ENCODE measurements at regions of chr13 and their contacts with region 1.

Region 1: DNA sequence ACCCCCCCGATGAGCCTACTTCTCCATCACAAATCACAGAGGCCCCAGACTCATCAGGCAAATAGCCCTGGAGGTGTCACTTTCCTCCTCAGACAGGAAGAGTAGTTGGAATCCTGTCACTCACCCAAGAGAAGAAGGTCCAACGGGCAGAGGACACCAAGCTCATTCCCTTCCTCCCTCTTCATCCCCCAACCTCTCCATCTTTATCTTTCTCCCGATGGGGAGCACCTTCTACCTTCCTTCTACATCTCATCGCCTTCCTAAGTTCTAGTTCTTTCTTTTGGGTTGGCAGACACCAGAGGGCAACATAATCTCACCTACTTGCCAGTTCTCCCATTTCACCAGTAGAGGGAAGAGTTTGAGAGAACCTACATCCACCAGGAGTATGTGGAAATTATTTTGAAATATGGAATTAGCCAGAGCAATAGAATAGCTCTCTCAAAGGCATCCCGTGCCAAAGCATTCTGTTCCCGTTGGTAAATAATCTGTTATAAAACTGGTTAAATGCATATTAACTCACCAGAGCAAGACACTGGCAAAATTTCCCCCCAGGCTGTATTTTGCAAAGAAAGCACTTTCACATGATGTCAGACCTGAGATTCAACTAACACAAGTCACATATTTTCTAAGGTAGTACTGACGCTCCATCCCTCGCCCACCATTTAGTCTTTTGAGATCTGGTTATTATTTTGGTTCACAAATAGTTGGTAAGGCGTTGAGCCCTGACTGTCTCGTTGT is 55.0 kb downstream of the ZIC5 start:
- DNase-seq: peak; percentile 66
- H3K4me3 ChIP-seq: no peak overlapping the region
- H3K27ac ChIP-seq: no peak overlapping the region
- H3K4me1 ChIP-seq: no peaks in the 10 kb centered on the region
- H3K27me3 ChIP-seq: no peaks in the 10 kb centered on the region
- CTCF ChIP-seq: peak; percentile 98 to 99

Region 2: GRCh38 chr13:99442273-99442895 is 474.2 kb before region 1 on chr13:
- CTCF ChIA-PET with region 1: no interaction called
- dilution Hi-C with region 1: no loop called
- in situ Hi-C with region 1: no loop called
- intact Hi-C with region 1: loop called (anchors 5 kb)
- DNase-seq: peak; percentile 16
- H3K4me3 ChIP-seq: no peak overlapping the region
- H3K27ac ChIP-seq: no peak overlapping the region
- H3K4me1 ChIP-seq: no peaks in the 10 kb centered on the region
- H3K27me3 ChIP-seq: no peaks in the 10 kb centered on the region
- CTCF ChIP-seq: peak; percentile 85 to 98

Region 3: GRCh38 chr13:99617474-99618255 is 298.9 kb before region 1 on chr13:
- CTCF ChIA-PET with region 1: no interaction called
- dilution Hi-C with region 1: no loop called
- in situ Hi-C with region 1: no loop called
- intact Hi-C with region 1: loop called (anchors 1 kb)
- DNase-seq: no peak
- H3K4me3 ChIP-seq: no peak overlapping the region
- H3K27ac ChIP-seq: no peak overlapping the region
- H3K4me1 ChIP-seq: peaks cover 22% of the 10 kb centered on the region
- H3K27me3 ChIP-seq: no peaks in the 10 kb centered on the region
- CTCF ChIP-seq: peak; percentile 73 to 79

Region 4: GRCh38 chr13:99935777-99936176 is 19.2 kb after region 1 on chr13:
- CTCF ChIA-PET with region 1: interaction called, 16 read pairs
- dilution Hi-C with region 1: no loop called
- in situ Hi-C with region 1: no loop called
- intact Hi-C with region 1: no loop called
- DNase-seq: no peak
- H3K4me3 ChIP-seq: no peak overlapping the region
- H3K27ac ChIP-seq: no peak overlapping the region
- H3K4me1 ChIP-seq: no peaks in the 10 kb centered on the region
- H3K27me3 ChIP-seq: peaks cover 2% of the 10 kb centered on the region
- CTCF ChIP-seq: no peak

Region 5: GRCh38 chr13:100514788-100515409 is 598.4 kb after region 1 on chr13:
- CTCF ChIA-PET with region 1: no interaction called
- dilution Hi-C with region 1: loop called (anchors 25 kb)
- in situ Hi-C with region 1: loop called (anchors 10 to 25 kb)
- intact Hi-C with region 1: loop called (anchors 1 kb)
- DNase-seq: peak; percentile 48
- H3K4me3 ChIP-seq: no peak overlapping the region
- H3K27ac ChIP-seq: no peak overlapping the region
- H3K4me1 ChIP-seq: no peaks in the 10 kb centered on the region
- H3K27me3 ChIP-seq: no peaks in the 10 kb centered on the region
- CTCF ChIP-seq: peak; percentile 94 to 97

Region 6: GRCh38 chr13:100532090-100532766 is 615.7 kb after region 1 on chr13:
- CTCF ChIA-PET with region 1: interaction called, 11 read pairs
- dilution Hi-C with region 1: no loop called
- in situ Hi-C with region 1: no loop called
- intact Hi-C with region 1: no loop called
- DNase-seq: no peak
- H3K4me3 ChIP-seq: no peak overlapping the region
- H3K27ac ChIP-seq: no peak overlapping the region
- H3K4me1 ChIP-seq: no peaks in the 10 kb centered on the region
- H3K27me3 ChIP-seq: no peaks in the 10 kb centered on the region
- CTCF ChIP-seq: no peak

Region 7: GRCh38 chr13:100854021-100854420 is 937.5 kb after region 1 on chr13:
- CTCF ChIA-PET with region 1: no interaction called
- dilution Hi-C with region 1: no loop called
- in situ Hi-C with region 1: no loop called
- intact Hi-C with region 1: no loop called
- DNase-seq: no peak
- H3K4me3 ChIP-seq: no peak overlapping the region
- H3K27ac ChIP-seq: no peak overlapping the region
- H3K4me1 ChIP-seq: no peaks in the 10 kb centered on the region
- H3K27me3 ChIP-seq: no peaks in the 10 kb centered on the region
- CTCF ChIP-seq: no peak